ENCODE measurements at regions of chr7 and their contacts with region 1.

Region 1: DNA sequence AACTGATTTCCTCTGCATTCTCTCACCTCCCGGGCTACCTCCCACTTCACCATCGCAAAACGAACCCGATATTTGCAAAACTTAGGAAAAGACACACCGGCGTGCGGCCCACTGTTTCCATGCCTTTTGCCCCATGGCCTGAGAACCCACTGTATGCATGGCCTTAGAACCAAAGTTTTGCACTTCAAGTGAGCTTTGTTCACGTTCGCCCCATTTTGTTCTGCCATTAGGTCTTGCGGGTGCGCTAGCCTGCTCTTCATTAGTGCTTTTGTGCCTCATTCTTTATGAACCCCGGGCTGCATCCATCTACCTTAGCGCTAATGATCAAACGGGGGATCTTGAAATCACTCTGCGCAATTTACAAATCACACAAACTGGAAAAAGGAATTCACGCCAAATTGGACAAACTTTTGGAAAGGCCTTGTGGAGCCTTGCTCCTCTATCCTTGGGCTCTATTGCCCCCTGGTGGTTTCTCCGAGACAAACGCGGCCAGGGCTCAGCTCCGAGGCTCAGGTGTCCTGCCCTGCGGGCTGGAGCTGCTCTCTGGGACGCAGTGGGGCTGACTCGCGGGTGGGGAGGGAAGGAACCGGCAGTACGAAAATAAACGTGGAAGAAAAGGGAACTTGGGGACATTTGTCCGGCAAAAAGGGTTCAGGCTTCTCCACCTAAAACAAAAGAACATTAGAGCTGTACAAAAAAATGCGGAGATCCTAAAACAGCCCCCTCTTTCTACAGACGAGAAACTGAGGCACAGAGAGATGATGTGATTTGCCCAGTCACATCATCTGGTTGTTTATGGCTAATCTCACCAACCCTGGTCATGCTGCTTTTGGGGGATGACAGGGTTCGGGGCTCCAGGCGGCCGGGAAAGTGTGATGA is 300.4 kb upstream of the NFE2L3 start:
- DNase-seq: peak; percentile 71
- ATAC-seq: peak; percentile 93
- H3K4me3 ChIP-seq: peak overlapping the region; percentile 28 to 50
- H3K27ac ChIP-seq: no peak overlapping the region; the same call in 1 of the 2 replicates
- H3K4me1 ChIP-seq: peaks cover 14% of the 10 kb centered on the region
- H3K27me3 ChIP-seq: peaks cover 32% of the 10 kb centered on the region
- CTCF ChIP-seq: peak; percentile 95

Region 2: DNA sequence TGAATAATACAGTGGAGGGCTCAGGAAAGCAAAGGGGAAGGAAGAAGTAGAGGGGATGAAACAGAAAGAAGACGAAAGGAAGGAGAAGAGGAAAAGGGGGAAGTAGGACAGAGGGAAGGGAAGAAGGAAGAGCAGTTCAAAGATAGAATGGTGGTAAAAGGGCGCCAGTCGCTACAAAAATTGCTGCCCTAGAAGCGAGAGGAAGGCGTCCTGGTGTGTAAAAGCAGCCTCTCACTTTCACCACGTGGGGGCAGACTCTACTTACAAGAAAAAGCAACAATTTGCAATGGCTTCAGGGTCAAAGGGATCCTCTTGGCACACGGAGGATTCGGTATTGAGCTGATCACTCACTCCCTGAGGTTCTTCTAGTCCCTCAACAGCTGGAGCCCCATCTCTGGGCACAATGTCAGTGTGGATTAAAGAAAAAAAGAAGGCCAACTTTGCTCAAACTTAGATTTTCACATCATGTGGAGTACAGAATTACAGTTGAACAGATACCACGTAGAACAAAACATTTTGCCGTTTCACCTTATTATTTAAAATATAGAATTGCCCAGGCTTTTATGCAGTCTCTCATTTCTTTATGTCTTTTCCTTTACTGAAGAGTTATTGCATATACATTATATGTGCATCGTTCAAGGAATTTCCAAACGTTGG is 591.9 kb before region 1 on chr7:
- CTCF ChIA-PET with region 1: interaction called, 20 read pairs
- POLR2A ChIA-PET with region 1: no interaction called
- in situ Hi-C with region 1: no loop called
- intact Hi-C with region 1: loop called (anchors 5 kb)
- DNase-seq: peak; percentile 46
- ATAC-seq: peak; percentile 94
- H3K4me3 ChIP-seq: no peak overlapping the region
- H3K27ac ChIP-seq: no peak overlapping the region
- H3K4me1 ChIP-seq: no peaks in the 10 kb centered on the region
- H3K27me3 ChIP-seq: peaks cover 9% of the 10 kb centered on the region
- CTCF ChIP-seq: peak; percentile 91

Region 3: GRCh38 chr7:25389489-25390106 is 462.0 kb before region 1 on chr7:
- CTCF ChIA-PET with region 1: interaction called, 5 read pairs
- POLR2A ChIA-PET with region 1: no interaction called
- in situ Hi-C with region 1: no loop called
- intact Hi-C with region 1: loop called (anchors 5 kb)
- DNase-seq: no peak
- ATAC-seq: peak; percentile 74
- H3K4me3 ChIP-seq: no peak overlapping the region
- H3K27ac ChIP-seq: no peak overlapping the region
- H3K4me1 ChIP-seq: no peaks in the 10 kb centered on the region
- H3K27me3 ChIP-seq: peaks cover 8% of the 10 kb centered on the region
- CTCF ChIP-seq: peak; percentile 76

Region 4: GRCh38 chr7:25565949-25566348 is 285.6 kb before region 1 on chr7:
- CTCF ChIA-PET with region 1: interaction called, 3 read pairs
- POLR2A ChIA-PET with region 1: no interaction called
- in situ Hi-C with region 1: no loop called
- intact Hi-C with region 1: loop called (anchors 2 kb)
- DNase-seq: peak; percentile 82
- ATAC-seq: no peak
- H3K4me3 ChIP-seq: no peak overlapping the region
- H3K27ac ChIP-seq: no peak overlapping the region
- H3K4me1 ChIP-seq: peaks cover 4% of the 10 kb centered on the region; the same call in 1 of the 2 replicates
- H3K27me3 ChIP-seq: peaks cover 16% of the 10 kb centered on the region
- CTCF ChIP-seq: peak; percentile 98

Region 5: GRCh38 chr7:25731068-25731845 is 120.3 kb before region 1 on chr7:
- CTCF ChIA-PET with region 1: interaction called, 3 read pairs
- POLR2A ChIA-PET with region 1: no interaction called
- in situ Hi-C with region 1: no loop called
- intact Hi-C with region 1: loop called (anchors 10 kb)
- DNase-seq: no peak
- ATAC-seq: no peak
- H3K4me3 ChIP-seq: no peak overlapping the region
- H3K27ac ChIP-seq: no peak overlapping the region
- H3K4me1 ChIP-seq: no peaks in the 10 kb centered on the region
- H3K27me3 ChIP-seq: peaks cover 15% of the 10 kb centered on the region
- CTCF ChIP-seq: no peak

Region 6: DNA sequence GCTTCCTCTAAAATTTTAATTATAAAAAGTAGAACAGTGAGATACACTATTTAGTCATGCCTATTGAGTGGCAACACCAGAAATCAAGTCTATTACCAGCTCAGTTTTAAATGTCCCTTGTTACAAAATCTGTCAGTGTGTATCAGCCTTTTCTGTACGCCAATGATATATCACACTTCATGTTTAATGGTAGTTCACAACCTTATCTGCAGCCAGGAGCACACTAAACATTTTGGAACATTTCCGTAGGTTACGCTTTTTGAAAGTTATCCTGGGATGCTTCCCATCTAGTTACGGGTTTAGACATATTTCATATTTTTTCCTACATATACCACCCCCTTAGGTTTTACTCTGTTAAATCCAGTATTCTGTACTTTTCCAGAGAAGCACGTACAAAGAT is 343.6 kb after region 1 on chr7:
- CTCF ChIA-PET with region 1: no interaction called
- POLR2A ChIA-PET with region 1: interaction called, 16 read pairs
- in situ Hi-C with region 1: no loop called
- intact Hi-C with region 1: no loop called
- DNase-seq: no peak
- ATAC-seq: no peak
- H3K4me3 ChIP-seq: peak overlapping the region in 1 of 2 experiments; percentile 98; a peak in 3 of 4 replicates
- H3K27ac ChIP-seq: peak overlapping the region; percentile 100; the same call in 1 of the 2 replicates
- H3K4me1 ChIP-seq: peaks cover 70% of the 10 kb centered on the region
- H3K27me3 ChIP-seq: no peaks in the 10 kb centered on the region
- CTCF ChIP-seq: no peak